Activated naive CD4-positive, alpha-beta T cell treated with anti-CD3 and anti-CD28 coated beads for 36 hours (primary cell): ENCODE measurements at regions of chr19 and their contacts with region 1.

Region 1: GRCh38 chr19:14337510-14337909 is 43.7 kb upstream of the ADGRE5 start:
- DNase-seq: peak; percentile 32
- H3K4me3 Mint-ChIP-seq: no peak overlapping the region
- H3K27ac Mint-ChIP-seq: no peak overlapping the region
- H3K4me1 Mint-ChIP-seq: peaks cover 15% of the 10 kb centered on the region
- H3K27me3 Mint-ChIP-seq: no peaks in the 10 kb centered on the region

Region 2: DNA sequence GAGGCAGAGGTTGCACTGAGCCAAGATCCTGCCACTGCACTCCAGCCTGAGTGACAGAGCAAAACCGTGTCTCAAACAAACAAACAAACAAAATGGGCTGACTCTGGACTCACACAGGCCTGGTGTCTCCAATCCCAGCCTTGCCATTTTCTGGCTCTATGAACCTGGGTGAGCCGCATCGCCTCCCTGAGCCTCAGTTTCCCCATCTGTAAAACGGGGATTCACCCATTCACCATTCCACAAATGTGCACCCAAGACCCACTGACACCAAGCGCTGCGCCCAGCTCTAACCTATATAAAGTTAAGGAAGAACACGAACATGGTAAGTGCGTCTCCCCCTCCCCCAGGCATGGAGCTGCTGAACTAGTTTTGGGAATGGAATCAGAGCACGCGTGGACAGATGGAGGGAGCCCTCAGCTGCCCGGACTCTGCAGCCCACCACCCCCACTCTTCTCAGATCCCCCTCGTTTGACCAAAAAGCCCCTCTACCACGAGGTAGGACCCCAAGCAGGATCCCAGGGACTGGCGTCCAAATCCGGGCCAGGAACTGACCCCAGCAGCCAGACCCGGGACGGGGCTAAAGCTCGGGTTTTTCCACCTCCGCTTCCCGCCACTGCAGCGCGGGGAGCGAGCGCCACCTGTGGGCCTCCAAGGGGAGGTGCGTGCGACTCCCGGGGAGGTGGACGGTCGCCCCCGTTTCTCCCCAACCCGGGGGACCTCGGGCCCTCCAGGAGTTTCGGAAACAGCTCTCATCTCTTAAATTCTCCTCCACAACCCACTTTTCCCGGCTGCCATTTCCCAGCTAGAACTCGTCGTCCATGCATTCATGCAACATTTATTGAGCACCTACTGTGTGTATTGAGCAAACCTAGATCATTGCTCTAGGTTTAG is 10.7 kb after region 1 on chr19:
- CTCF ChIA-PET with region 1: interaction called, 24 read pairs
- intact Hi-C with region 1: no loop called
- DNase-seq: peak; percentile 74
- H3K4me3 Mint-ChIP-seq: peak overlapping the region; percentile 43
- H3K27ac Mint-ChIP-seq: peak overlapping the region; percentile 79
- H3K4me1 Mint-ChIP-seq: peaks cover 20% of the 10 kb centered on the region
- H3K27me3 Mint-ChIP-seq: no peaks in the 10 kb centered on the region